ENCODE measurements at regions of chrX and their contacts with region 1.

Region 1: DNA sequence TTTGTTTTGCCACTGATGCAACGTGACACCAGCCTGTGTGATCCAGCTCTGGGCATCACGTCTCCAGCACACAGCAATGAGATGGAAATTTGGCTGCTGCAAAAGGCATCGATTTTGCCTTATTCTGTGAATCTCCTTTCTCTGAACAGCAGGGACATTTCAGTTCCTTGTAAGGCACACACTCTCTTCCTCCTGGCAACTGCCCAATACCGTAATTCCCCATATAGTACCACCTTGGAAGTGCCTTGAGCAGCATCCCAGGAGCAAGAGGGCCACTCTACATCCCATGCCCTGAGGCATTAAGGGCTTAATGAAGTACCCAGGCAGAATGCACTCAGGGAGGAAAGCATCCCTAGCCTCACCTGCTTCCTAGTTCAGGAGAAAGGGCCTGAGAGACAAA is 10.5 kb upstream of the MAMLD1 start:
- DNase-seq: no peak
- H3K4me3 ChIP-seq: no peak overlapping the region
- H3K27ac ChIP-seq: no peak overlapping the region
- H3K27me3 ChIP-seq: peaks cover 0 to 85% (median 13%) of the 10 kb centered on the region in 45 donors
- CTCF ChIP-seq: no peak

Region 2: DNA sequence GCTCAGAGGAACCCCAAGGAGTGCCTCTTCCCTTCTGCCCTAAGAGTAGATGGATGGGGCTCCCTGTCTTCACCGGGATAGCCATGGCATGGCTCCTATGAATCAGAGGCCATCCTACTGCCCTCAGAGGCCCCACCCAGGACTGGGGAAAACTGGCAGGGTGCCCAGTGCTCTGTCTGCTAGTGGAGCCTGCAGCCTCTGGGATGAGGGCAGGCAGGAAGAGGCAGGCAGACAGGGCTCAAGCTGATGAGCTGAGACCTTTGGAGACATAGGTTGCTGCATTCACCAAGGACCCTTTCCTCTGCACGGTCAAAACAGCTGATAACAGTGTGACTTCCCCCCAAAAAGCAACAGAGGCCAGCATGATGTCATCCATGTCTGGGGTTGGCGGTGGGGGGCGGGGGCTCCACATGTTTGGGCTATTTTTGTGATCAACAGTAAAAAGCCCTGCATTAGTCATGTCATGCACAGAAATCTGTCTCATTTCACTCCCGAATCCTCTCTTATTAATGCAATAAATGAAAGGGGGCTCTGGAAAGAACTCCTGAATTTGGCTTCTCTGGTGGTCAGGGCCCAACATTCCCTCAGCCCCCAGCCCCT is 197.0 kb before region 1 on chrX:
- intact Hi-C with region 1: loop called in 1 of 2 experiments (anchors 10 kb)
- DNase-seq: no peak
- H3K4me3 ChIP-seq: no peak overlapping the region
- H3K27ac ChIP-seq: no peak overlapping the region
- H3K27me3 ChIP-seq: peaks cover 0 to 70% (median 10%) of the 10 kb centered on the region in 45 donors
- CTCF ChIP-seq: no peak